Cardiac septum (tissue), 1 donor: ENCODE measurements at regions of chr11 and their contacts with region 1.

Region 1: GRCh38 chr11:8225589-8226036 is 38.1 kb downstream of the LMO1 start:
- DNase-seq: no peak

Region 2: DNA sequence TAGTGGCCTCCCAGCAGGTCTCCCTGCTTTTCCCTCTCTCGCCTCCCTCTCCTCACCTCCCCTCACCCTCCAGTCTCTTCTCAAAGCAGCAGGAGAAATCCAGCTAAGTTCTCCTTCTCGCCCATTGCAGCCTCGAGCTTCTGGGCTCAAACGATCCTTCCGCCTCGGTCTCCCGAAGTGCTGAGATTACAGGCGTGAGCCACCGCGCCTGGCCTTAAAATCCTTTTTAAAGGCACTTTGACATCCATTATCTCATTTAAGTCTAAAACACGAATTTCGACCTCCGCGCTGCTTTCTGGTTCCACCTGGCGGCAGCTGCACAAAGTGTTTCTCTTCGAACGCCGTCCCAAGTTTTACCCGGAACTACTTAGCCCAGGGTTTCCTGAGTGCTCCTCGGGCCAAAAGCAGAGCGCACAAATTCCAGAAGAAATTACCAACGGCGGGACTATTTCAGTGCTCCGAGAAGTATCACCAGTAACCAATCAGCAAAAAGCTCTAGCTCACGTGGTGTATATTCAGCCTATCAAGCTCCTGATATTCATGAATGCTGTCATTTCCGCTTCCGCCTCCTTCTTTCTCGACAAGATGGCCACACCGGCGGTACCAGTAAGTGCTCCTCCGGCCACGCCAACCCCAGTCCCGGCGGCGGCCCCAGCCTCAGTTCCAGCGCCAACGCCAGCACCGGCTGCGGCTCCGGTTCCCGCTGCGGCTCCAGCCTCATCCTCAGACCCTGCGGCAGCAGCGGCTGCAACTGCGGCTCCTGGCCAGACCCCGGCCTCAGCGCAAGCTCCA is 238.6 kb before region 1 on chr11 and contains the start of gene EIF3F:
- intact Hi-C with region 1: no loop called
- DNase-seq: peak; percentile 92
- total RNA-seq, gene EIF3F: 123 TPM

Region 3: DNA sequence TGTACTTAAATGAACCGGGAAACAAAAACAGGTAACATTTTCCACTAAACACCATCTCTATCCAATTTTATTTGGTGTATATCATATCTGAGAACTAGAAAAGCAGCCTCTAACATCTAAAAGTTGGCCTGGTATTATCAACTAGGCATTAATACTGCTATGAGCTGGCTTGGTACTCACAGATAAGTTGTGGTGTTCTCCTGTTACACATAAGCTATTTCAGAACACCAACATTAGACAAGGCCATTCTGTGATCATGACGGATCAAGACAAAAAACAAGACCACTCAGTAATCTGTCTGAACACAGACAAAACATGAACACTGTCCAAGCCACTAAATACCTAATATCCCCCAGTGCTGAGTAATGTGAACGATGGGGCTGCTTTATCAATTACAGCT is 68.7 kb before region 1 on chr11:
- intact Hi-C with region 1: no loop called
- DNase-seq: no peak

Region 4: GRCh38 chr11:8263769-8264410 is 38.3 kb after region 1 on chr11 and contains the start of gene LMO1:
- intact Hi-C with region 1: loop called (anchors 2 kb)
- DNase-seq: peak; percentile 82
- total RNA-seq, gene LMO1: 0.46 TPM

Region 5: GRCh38 chr11:8318336-8318935 is 92.8 kb after region 1 on chr11:
- intact Hi-C with region 1: loop called (anchors 10 kb)
- DNase-seq: peak; percentile 35

Region 6: DNA sequence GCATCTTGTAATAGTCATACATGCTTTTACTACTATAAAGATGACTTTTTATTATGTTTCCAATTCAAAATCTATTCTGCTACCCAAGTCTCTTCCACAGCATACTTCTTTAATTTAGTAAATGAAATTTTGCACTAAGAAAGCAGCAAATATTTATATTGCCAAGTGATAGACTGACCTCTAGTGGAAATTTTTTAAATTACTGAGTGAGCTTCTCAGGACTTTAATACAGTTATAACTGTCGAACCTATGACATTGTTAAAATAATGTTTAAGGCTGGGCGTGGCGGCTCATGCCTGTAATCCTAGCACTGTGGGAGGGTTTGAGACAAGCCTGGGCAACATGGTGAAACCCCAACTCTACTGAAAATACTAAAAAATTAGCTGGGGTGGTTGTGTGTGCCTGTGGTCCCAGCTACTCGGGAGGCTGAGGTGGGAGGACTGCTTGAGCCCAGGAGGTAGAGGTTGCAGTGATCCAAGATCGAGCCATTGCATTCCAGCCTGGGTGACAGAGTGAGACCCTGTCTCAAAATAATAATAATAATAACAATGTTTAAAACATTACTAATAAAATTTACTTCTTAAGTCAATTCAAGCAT is 341.1 kb after region 1 on chr11:
- intact Hi-C with region 1: loop called (anchors 2 kb)
- DNase-seq: no peak